GM12878 (cell line): ENCODE measurements at regions of chr21 and their contacts with region 1.

Region 1: DNA sequence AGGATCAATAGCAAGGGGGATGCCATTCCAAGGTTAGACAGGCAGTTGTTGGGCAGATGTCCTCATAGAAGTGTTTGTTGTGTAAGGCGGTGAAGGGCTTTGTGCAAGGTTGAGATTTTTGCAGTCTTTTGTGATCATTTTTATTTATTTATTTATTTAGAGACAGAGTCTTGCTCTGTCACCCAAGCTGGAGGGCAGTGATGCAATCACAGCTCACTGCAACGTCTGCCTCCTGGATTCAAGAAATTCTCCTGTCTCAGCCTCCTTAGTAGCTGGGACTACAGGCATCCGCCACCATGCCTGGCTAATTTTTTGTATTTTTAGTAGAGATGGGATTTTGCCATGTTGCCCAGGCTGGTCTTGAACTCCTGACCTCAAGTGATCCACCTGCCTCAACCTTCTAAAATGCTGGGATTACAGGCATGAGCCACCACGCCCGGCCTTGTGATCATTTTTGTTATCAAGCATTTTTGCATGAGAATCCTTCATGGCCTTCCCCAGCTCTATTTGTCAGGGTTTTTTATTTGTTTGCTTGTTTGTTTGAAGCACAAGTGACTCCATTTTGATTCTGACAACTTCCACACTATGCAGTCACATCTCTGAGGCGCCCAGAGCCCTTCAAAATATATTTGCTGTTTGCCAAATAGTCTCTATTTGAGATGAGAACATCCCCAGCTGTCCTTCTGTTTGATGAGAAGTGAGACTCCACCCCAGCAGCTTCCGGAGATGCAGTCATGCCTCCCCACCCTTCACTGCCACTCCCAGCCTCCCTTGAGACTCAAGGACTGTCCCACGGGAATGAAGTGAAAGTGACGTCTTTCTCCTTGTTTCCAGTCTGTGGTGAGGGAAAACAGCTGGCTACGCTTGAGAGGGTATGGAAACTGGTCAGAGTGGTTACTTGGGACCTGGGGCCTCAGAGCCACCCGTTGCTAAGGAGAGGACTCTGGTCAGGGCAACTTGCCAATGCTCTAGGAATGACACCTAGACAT is 38.0 kb downstream of the TMEM50B start:
- DNase-seq: peak; percentile 91
- ATAC-seq: peak; percentile 87
- H3K4me3 ChIP-seq: no peak overlapping the region
- H3K27ac ChIP-seq: peak overlapping the region; percentile 90
- H3K4me1 ChIP-seq: peaks cover 19% of the 10 kb centered on the region
- H3K27me3 ChIP-seq: no peaks in the 10 kb centered on the region
- CTCF ChIP-seq: no peak
- EP300 ChIP-seq: no peak; a peak in 1 of 4 replicates
- POLR2A ChIP-seq: no peak; the same call in 1 of the 2 replicates
- RAD21 ChIP-seq: no peak

Region 2: GRCh38 chr21:32940079-32941014 is 501.4 kb before region 1 on chr21:
- CTCF ChIA-PET with region 1: interaction called, 10 read pairs
- POLR2A ChIA-PET with region 1: no interaction called
- RAD21 ChIA-PET with region 1: no interaction called
- SMC1A ChIA-PET with region 1: interaction called, 5 read pairs
- in situ Hi-C with region 1: loop called (anchors 10 kb)
- intact Hi-C with region 1: loop called (anchors 10 kb)
- DNase-seq: no peak
- ATAC-seq: peak; percentile 76
- H3K4me3 ChIP-seq: no peak overlapping the region
- H3K27ac ChIP-seq: no peak overlapping the region
- H3K4me1 ChIP-seq: no peaks in the 10 kb centered on the region
- H3K27me3 ChIP-seq: no peaks in the 10 kb centered on the region
- CTCF ChIP-seq: peak; percentile 60 to 78 (median 67)
- EP300 ChIP-seq: no peak
- POLR2A ChIP-seq: no peak
- RAD21 ChIP-seq: peak; percentile 64

Region 3: GRCh38 chr21:33205476-33205875 is 236.3 kb before region 1 on chr21:
- CTCF ChIA-PET with region 1: interaction called, 319 read pairs
- POLR2A ChIA-PET with region 1: interaction called, 14 read pairs
- RAD21 ChIA-PET with region 1: interaction called, 37 read pairs
- SMC1A ChIA-PET with region 1: interaction called, 20 read pairs
- in situ Hi-C with region 1: loop called (anchors 5 kb)
- intact Hi-C with region 1: loop called (anchors 1 kb)
- DNase-seq: no peak
- ATAC-seq: peak; percentile 29
- H3K4me3 ChIP-seq: no peak overlapping the region
- H3K27ac ChIP-seq: peak overlapping the region; percentile 51
- H3K4me1 ChIP-seq: peaks cover 19% of the 10 kb centered on the region
- H3K27me3 ChIP-seq: no peaks in the 10 kb centered on the region
- CTCF ChIP-seq: peak in 1 of 3 experiments; percentile 8; a peak in 1 of 6 replicates
- EP300 ChIP-seq: no peak
- POLR2A ChIP-seq: no peak
- RAD21 ChIP-seq: no peak

Region 4: GRCh38 chr21:33332143-33332542 is 109.6 kb before region 1 on chr21:
- CTCF ChIA-PET with region 1: interaction called, 14 read pairs
- POLR2A ChIA-PET with region 1: no interaction called
- RAD21 ChIA-PET with region 1: interaction called, 3 read pairs
- SMC1A ChIA-PET with region 1: interaction called, 3 read pairs
- in situ Hi-C with region 1: no loop called
- intact Hi-C with region 1: no loop called
- DNase-seq: no peak
- ATAC-seq: peak; percentile 83
- H3K4me3 ChIP-seq: peak overlapping the region; percentile 0; the same call in 1 of the 2 replicates
- H3K27ac ChIP-seq: peak overlapping the region; percentile 82
- H3K4me1 ChIP-seq: peaks cover 29% of the 10 kb centered on the region
- H3K27me3 ChIP-seq: no peaks in the 10 kb centered on the region
- CTCF ChIP-seq: no peak
- EP300 ChIP-seq: no peak
- POLR2A ChIP-seq: peak; percentile 17; the same call in 1 of the 2 replicates
- RAD21 ChIP-seq: 0 out of 2 replicates have a peak, but pooled peaks have one; percentile 1

Region 5: GRCh38 chr21:33360881-33361602 is 80.7 kb before region 1 on chr21:
- CTCF ChIA-PET with region 1: interaction called, 182 read pairs
- POLR2A ChIA-PET with region 1: interaction called, 5 read pairs
- RAD21 ChIA-PET with region 1: interaction called, 128 read pairs
- SMC1A ChIA-PET with region 1: interaction called, 133 read pairs
- in situ Hi-C with region 1: no loop called
- intact Hi-C with region 1: loop called (anchors 1 kb)
- DNase-seq: peak; percentile 78
- ATAC-seq: peak; percentile 98
- H3K4me3 ChIP-seq: peak overlapping the region; percentile 29
- H3K27ac ChIP-seq: peak overlapping the region; percentile 51
- H3K4me1 ChIP-seq: peaks cover 24% of the 10 kb centered on the region
- H3K27me3 ChIP-seq: no peaks in the 10 kb centered on the region
- CTCF ChIP-seq: peak; percentile 94 to 96 (median 94)
- EP300 ChIP-seq: no peak
- POLR2A ChIP-seq: peak; percentile 53; the same call in 1 of the 2 replicates
- RAD21 ChIP-seq: peak; percentile 66

Region 6: GRCh38 chr21:33386222-33386784 is 55.5 kb before region 1 on chr21:
- CTCF ChIA-PET with region 1: interaction called, 6 read pairs
- POLR2A ChIA-PET with region 1: interaction called, 6 read pairs
- RAD21 ChIA-PET with region 1: interaction called, 148 read pairs
- SMC1A ChIA-PET with region 1: interaction called, 31 read pairs
- in situ Hi-C with region 1: no loop called
- intact Hi-C with region 1: loop called (anchors 1 kb)
- DNase-seq: no peak
- ATAC-seq: no peak
- H3K4me3 ChIP-seq: no peak overlapping the region
- H3K27ac ChIP-seq: no peak overlapping the region
- H3K4me1 ChIP-seq: peaks cover 35% of the 10 kb centered on the region
- H3K27me3 ChIP-seq: no peaks in the 10 kb centered on the region
- CTCF ChIP-seq: peak in 1 of 3 experiments; percentile 34; a peak in 1 of 6 replicates
- EP300 ChIP-seq: no peak
- POLR2A ChIP-seq: no peak
- RAD21 ChIP-seq: no peak